CD4-positive, alpha-beta memory T cell (primary cell): ENCODE measurements at regions of chr2 and their contacts with region 1.

Region 1: DNA sequence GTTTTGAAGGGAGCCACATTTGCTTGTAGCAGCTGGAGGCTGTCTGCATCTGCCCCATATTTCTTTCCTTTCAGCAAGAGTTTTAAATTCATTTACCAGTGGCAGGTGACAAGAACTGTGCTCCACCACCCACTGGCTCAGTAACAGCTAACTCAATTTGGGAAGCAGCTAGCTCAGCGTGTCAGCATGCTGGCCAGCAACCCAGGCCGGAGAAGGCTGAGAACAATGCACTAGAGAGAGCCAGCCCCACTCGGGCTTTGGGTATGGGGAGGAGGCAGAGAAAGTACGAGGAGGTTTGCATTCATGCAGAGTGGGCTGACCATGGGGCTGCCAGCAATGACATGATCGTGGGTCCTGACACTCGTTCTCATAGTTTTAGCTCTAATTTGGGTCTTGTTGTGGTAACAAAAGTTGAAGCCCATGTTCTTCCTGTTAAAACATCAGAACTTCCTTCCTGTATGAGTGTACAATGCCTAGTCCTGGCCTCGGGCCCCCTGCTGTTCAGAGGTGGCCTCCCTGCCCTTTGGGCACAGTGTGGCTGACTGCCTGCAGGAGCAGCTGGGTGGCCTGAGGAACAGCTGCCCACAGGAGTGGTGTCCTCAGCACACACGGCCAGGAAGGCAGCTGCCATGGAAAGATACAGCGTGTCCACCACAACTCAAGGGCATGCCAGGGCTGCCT is 23.0 kb downstream of the CDC42EP3 start:
- DNase-seq: peak; percentile 42 to 76 (median 50)
- H3K4me3 ChIP-seq: peak overlapping the region in 1 of 2 donors; percentile 50
- H3K4me3 Mint-ChIP-seq: peak overlapping the region in 7 of 8 donors; percentile 66 to 91 (median 80)
- H3K27ac ChIP-seq: peak overlapping the region; percentile 56
- H3K27ac Mint-ChIP-seq: peak overlapping the region; percentile 85 to 98 (median 92)
- H3K4me1 ChIP-seq: peaks cover 97% of the 10 kb centered on the region
- H3K4me1 Mint-ChIP-seq: peaks cover 76 to 96% (median 88%) of the 10 kb centered on the region in 4 donors
- H3K27me3 ChIP-seq: no peaks in the 10 kb centered on the region
- H3K27me3 Mint-ChIP-seq: no peaks in the 10 kb centered on the region

Region 2: GRCh38 chr2:37549598-37549997 is 98.9 kb before region 1 on chr2:
- CTCF ChIA-PET with region 1: interaction called, 14 read pairs
- POLR2A ChIA-PET with region 1: no interaction called
- intact Hi-C with region 1: no loop called
- DNase-seq: no peak
- H3K4me3 ChIP-seq: no peak overlapping the region
- H3K4me3 Mint-ChIP-seq: no peak overlapping the region
- H3K27ac ChIP-seq: no peak overlapping the region
- H3K27ac Mint-ChIP-seq: no peak overlapping the region
- H3K4me1 ChIP-seq: peaks cover 12% of the 10 kb centered on the region
- H3K4me1 Mint-ChIP-seq: peaks cover 13 to 26% (median 16%) of the 10 kb centered on the region in 4 donors
- H3K27me3 ChIP-seq: no peaks in the 10 kb centered on the region
- H3K27me3 Mint-ChIP-seq: no peaks in the 10 kb centered on the region

Region 3: DNA sequence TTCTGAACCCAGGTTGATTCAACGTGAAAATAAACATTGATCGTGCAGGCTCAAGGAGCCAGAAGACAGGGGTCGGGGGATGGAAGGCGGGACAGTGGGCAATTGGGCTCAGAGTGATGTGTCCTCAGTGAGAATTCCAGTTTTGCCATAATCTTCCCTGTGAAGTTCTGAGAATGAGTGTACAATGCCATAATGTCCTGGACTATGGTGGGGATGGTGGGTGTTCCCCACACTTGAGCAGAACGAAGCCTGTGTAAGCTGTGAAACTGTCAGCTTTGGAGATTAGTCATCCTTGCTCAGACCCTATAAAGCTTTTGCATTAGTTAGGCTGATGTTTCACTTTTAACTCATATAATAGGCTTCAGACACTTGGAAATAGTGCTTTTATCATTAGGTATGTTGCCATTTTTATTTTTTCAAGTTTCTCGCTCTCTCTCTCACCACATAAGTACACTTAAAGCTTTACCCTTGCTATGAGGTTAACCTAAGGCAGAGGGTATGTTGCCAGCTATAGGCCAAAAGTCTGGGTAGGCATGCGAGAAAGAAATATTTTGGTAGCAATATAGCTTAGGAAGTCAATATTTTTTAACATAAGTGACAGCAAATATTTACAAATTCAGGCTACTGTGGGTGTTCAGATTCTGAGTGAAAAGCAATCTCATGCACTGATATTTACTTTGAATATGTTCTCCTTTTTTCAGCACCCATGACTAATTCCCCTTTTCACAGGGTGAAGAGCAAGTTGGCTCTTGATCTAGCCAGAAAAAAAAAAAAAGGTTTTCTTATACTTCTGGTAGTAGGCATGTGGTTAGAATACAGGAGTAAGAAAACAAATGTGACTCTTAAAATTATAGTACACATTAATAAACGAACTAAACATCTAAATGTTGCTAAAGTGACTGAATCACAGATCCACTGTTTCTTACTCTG is 24.2 kb before region 1 on chr2:
- CTCF ChIA-PET with region 1: interaction called, 23 read pairs
- POLR2A ChIA-PET with region 1: interaction called, 92 read pairs
- intact Hi-C with region 1: loop called (anchors 2 kb)
- DNase-seq: peak in 2 of 5 donors; percentile 20 to 43
- H3K4me3 ChIP-seq: peak overlapping the region in 1 of 2 donors; percentile 36
- H3K4me3 Mint-ChIP-seq: peak overlapping the region; percentile 1 to 83 (median 78)
- H3K27ac ChIP-seq: peak overlapping the region; percentile 66
- H3K27ac Mint-ChIP-seq: peak overlapping the region; percentile 87 to 97 (median 91)
- H3K4me1 ChIP-seq: peaks cover 75% of the 10 kb centered on the region
- H3K4me1 Mint-ChIP-seq: peaks cover 52 to 84% (median 68%) of the 10 kb centered on the region in 4 donors
- H3K27me3 ChIP-seq: no peaks in the 10 kb centered on the region
- H3K27me3 Mint-ChIP-seq: no peaks in the 10 kb centered on the region

Region 4: DNA sequence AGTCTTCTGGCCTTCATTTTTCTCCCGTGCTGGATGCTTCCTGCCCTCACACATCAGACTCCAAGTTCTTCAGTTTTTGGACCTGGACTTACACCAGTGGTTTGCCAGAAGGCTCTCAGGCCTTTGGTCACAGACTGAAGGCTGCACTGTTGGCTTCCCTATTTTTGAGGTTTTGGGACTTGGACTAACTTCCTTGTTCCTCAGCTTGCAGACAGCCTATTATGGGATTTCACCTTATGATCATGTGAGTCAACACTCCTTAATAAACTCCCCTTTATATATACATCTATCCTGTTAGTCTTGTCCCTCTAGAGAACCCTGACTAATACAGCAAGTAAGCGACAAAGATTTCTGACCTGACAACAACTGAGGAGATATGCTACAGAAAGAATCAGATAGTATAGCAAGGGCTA is 15.8 kb after region 1 on chr2:
- CTCF ChIA-PET with region 1: interaction called, 26 read pairs
- POLR2A ChIA-PET with region 1: interaction called, 77 read pairs
- intact Hi-C with region 1: loop called (anchors 1 kb)
- DNase-seq: no peak
- H3K4me3 ChIP-seq: no peak overlapping the region
- H3K4me3 Mint-ChIP-seq: peak overlapping the region in 6 of 8 donors; percentile 11 to 57 (median 28)
- H3K27ac ChIP-seq: no peak overlapping the region
- H3K27ac Mint-ChIP-seq: peak overlapping the region; percentile 20 to 96 (median 78)
- H3K4me1 ChIP-seq: peaks cover 98% of the 10 kb centered on the region
- H3K4me1 Mint-ChIP-seq: peaks cover 75 to 99% (median 87%) of the 10 kb centered on the region in 4 donors
- H3K27me3 ChIP-seq: no peaks in the 10 kb centered on the region
- H3K27me3 Mint-ChIP-seq: no peaks in the 10 kb centered on the region

Region 5: GRCh38 chr2:37688771-37689468 is 40.4 kb after region 1 on chr2:
- CTCF ChIA-PET with region 1: no interaction called
- POLR2A ChIA-PET with region 1: no interaction called
- intact Hi-C with region 1: no loop called
- DNase-seq: no peak
- H3K4me3 ChIP-seq: no peak overlapping the region
- H3K4me3 Mint-ChIP-seq: no peak overlapping the region
- H3K27ac ChIP-seq: no peak overlapping the region
- H3K27ac Mint-ChIP-seq: no peak overlapping the region
- H3K4me1 ChIP-seq: peaks cover 12% of the 10 kb centered on the region
- H3K4me1 Mint-ChIP-seq: peaks cover 4 to 11% (median 6%) of the 10 kb centered on the region in 4 donors
- H3K27me3 ChIP-seq: no peaks in the 10 kb centered on the region
- H3K27me3 Mint-ChIP-seq: no peaks in the 10 kb centered on the region